Activated naive CD8-positive, alpha-beta T cell treated with anti-CD3 and anti-CD28 coated beads, Interleukin-2, amount 10 ng/mL, durations not matched to agents 7 days and 5 days (primary cell): ENCODE measurements at regions of chr19 and their contacts with region 1.

Region 1: GRCh38 chr19:41327576-41328156 is 17.7 kb downstream of the CCDC97 start:
- DNase-seq: peak; percentile 87
- ATAC-seq: peak; percentile 58
- H3K4me3 Mint-ChIP-seq: peak overlapping the region; percentile 78
- H3K27ac Mint-ChIP-seq: peak overlapping the region; percentile 87
- H3K4me1 Mint-ChIP-seq: peaks cover 54% of the 10 kb centered on the region
- H3K27me3 Mint-ChIP-seq: no peaks in the 10 kb centered on the region

Region 2: DNA sequence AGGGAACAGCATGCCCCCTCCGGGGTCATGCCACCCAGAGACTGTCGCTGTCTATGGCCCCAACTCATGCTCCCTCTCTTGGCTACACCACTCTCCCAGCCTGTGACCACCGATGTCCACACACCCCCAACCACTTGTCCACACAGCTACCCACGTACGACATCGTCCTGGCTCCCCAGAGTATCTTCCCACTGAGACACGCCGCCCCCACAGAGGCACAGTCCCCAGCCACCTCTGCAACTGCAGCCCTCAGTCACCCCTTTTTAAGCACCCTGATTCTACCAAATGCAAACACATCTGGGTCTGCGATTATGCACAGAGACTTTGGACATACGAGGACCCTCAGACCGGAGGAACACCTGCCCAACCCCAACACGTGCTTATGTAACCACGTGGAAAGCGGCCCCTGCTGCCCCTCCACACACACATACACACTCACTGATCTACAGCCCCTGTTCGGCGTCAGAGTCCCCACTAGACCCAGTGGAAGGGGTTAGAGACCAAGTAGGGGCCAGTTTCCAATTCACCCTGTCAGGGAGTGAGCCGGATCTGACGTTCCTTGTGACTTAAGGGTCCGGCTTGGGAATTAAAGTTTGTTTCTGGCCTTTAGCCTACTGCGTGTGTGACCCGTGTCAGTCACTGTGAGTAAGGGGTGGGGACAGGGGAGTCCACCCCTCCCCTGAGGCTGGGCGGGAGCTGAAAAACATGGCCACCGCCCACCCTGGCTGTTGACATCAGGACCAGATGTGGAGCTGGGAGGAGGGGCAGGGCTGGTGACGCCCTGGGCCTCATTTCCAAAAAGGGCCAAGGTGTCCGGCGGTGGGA is 120.5 kb before region 1 on chr19:
- POLR2A ChIA-PET with region 1: interaction called, 10 read pairs
- DNase-seq: no peak
- ATAC-seq: no peak
- H3K4me3 Mint-ChIP-seq: no peak overlapping the region
- H3K27ac Mint-ChIP-seq: no peak overlapping the region
- H3K4me1 Mint-ChIP-seq: peaks cover 3% of the 10 kb centered on the region
- H3K27me3 Mint-ChIP-seq: no peaks in the 10 kb centered on the region

Region 3: DNA sequence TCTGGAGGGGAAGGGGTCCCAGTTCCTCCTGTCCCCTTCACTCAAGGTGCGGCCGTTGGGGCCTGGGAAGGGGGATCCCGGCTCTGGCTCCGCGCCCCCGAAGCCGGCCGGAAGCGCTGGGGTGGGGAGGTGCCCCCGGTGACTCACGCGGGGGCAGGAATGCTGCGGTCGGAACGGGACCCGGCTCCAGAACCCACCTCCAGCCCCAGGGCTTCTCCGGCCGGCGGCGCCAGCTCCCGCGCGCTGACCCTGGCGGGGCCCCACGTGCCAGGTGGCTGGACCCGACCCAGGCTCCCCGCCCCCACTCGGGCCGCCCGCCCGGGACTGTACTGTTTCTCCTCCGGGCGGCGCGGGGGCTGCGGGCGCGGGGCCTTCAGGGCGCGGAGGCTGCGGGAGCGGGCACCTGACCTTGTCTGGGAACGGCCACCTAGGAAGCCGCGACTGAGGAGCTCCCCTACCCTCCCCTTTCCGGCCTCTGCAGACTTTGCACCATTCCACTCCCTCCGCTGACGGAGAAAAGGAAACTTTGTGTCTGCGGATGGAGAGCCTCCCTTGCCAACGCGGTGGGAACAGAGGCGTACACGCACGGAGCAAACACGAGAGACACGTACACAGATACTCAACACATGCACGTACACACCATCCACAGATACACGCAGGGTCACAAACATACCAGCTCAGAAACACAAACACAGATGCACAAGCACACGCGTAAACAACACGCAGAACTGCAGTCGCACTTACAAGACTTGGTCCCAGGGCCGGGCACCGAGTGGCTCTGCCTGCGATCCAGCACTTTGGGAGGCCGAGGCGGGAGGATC is 101.4 kb before region 1 on chr19:
- POLR2A ChIA-PET with region 1: no interaction called
- DNase-seq: peak; percentile 60
- ATAC-seq: peak; percentile 62
- H3K4me3 Mint-ChIP-seq: peak overlapping the region; percentile 90
- H3K27ac Mint-ChIP-seq: peak overlapping the region; percentile 84
- H3K4me1 Mint-ChIP-seq: peaks cover 17% of the 10 kb centered on the region
- H3K27me3 Mint-ChIP-seq: peaks cover 19% of the 10 kb centered on the region

Region 4: DNA sequence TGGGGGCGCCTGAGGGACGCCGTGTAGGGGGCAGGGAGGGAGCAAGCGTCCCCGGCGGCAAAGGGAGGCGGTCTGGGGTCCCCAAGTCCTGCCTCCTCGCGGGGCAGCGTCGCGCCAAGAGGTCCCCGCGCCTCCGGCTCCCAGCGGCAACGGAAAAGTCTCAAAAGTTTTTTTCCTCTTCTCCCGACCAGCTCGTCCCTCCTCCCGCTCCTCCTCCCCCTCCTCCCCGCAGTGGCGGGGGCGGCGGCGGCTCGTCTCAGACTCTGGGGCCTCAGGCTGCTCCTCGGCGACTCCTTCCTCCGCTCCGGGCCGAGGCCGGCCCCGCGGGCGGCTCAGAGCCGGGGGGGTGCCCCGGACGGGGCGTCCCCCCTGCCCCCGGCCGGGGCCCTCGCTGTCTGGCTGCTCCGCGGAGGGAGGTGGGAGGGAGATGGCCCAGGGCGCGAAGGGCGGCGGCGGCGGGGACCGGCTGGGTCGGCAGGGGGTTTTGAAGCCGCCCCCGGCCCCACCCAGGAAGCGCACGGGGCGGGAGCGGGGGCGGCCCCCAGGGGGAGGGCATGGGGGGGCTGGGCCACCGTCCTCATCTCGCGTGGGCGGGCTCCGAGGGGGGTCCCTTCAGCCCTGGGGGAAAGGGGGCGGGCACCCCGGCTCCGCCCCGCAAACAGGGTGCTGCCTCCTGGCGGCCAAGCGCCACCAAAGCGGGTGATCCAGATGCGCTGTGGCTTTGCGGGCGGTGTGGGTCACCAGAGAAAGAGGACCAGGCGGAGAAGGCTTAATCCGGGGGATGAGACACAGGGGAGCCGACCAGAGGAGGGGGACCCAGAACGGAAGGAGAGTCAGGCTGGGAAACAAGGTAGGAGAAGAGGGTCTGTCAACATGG is 26.0 kb after region 1 on chr19 and contains the start of gene TGFB1:
- POLR2A ChIA-PET with region 1: interaction called, 54 read pairs
- DNase-seq: peak; percentile 96
- ATAC-seq: peak; percentile 46
- H3K4me3 Mint-ChIP-seq: peak within 1 kb of the TSS; percentile 97
- H3K27ac Mint-ChIP-seq: peak within 1 kb of the TSS; percentile 97
- H3K4me1 Mint-ChIP-seq: peaks cover 59% of the 10 kb centered on the region
- H3K27me3 Mint-ChIP-seq: no peaks in the 10 kb centered on the region
- total RNA-seq, gene TGFB1: 172 to 179 TPM